Colonic mucosa (tissue), 4 donors: ENCODE measurements at regions of chr5 and their contacts with region 1.

Region 1: DNA sequence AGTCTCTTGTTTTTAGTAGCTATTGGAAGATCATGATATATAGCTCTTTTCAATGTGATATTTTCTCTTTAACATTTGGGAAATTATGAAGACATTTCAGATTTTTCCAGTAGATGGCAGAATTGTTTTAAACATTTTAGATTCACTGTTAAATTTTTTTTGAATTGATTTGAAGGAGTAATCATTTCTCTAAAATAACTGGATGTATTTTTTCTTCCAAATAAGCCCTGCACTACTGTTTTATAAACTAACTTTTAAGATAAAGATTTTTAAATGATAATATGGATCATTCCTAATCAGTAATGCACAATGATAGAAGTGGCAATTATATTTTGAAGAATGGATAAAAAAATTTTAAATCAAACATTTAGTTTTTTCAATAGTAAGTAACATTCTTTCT is 14.2 kb downstream of the NDUFAF2 start:
- DNase-seq: no peak
- H3K4me3 ChIP-seq: no peak overlapping the region
- H3K27ac ChIP-seq: no peak overlapping the region
- H3K4me1 ChIP-seq: no peaks in the 10 kb centered on the region
- H3K27me3 ChIP-seq: no peaks in the 10 kb centered on the region
- CTCF ChIP-seq: no peak

Region 2: DNA sequence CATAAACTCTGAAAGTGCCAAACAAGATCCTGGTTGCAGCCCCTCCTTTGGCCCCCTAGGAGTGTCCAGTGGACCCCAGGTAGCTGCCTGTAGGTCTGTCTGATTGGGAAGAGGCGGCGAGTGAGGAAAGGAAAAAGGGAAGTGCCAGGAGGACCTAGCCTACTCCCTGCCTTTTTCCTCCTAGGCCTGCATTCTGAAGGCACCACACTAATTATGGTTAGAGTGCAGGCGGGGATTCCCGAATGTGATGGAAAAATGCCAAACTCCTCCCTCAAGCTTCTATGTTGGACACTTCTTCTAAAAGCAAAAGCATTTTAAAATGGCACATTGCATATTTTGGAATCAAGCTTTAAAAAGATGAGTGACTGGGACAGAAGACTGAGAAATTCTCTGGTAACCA is 286.3 kb after region 1 on chr5:
- intact Hi-C with region 1: no loop called
- DNase-seq: peak; percentile 54
- H3K4me3 ChIP-seq: no peak overlapping the region
- H3K27ac ChIP-seq: peak overlapping the region; percentile 70
- H3K4me1 ChIP-seq: no peaks in the 10 kb centered on the region
- H3K27me3 ChIP-seq: no peaks in the 10 kb centered on the region
- CTCF ChIP-seq: no peak

Region 3: DNA sequence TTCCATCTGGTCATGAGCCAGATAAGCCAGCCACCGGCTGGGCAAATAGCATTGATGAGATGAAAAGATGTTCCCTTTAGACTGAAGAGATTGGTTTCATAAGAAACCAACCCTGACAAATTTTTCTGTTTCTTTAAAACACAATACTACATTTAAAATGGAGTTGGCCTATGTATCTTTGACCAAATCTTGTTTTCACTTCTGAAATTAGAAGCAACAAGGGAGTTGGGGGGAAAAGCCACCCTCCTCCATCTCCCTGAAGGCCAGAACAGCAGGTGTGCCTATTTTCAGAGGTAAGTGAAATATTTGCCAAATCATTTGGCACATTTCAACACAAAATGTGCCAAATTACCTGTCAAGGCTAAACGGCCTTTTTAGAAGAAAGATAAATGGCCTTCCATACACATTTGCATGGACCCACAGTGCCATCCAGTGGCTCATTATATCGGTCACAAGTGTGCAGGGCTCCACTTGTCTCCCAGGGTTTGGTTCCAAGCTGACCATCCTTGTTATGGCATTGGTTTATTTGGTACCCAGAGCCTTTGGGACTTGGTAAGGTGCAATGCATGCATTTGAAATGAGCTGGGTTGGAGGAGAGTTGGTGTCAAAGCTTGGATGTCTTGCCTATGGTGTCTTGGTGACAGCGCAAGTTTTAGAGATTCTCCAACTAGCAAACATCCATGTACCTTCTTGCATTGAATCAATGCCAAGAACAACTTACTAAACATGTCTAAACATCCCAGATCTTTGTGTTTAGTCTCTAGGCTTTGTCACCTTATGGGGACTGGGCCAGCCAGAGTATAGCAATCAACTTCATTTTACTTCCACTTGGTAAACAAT is 974.9 kb after region 1 on chr5:
- intact Hi-C with region 1: loop called (anchors 5 kb)
- DNase-seq: peak; percentile 49
- H3K4me3 ChIP-seq: no peak overlapping the region
- H3K27ac ChIP-seq: no peak overlapping the region
- H3K4me1 ChIP-seq: no peaks in the 10 kb centered on the region
- H3K27me3 ChIP-seq: no peaks in the 10 kb centered on the region
- CTCF ChIP-seq: peak; percentile 63